ENCODE measurements at regions of chr3 and their contacts with region 1.

Region 1: DNA sequence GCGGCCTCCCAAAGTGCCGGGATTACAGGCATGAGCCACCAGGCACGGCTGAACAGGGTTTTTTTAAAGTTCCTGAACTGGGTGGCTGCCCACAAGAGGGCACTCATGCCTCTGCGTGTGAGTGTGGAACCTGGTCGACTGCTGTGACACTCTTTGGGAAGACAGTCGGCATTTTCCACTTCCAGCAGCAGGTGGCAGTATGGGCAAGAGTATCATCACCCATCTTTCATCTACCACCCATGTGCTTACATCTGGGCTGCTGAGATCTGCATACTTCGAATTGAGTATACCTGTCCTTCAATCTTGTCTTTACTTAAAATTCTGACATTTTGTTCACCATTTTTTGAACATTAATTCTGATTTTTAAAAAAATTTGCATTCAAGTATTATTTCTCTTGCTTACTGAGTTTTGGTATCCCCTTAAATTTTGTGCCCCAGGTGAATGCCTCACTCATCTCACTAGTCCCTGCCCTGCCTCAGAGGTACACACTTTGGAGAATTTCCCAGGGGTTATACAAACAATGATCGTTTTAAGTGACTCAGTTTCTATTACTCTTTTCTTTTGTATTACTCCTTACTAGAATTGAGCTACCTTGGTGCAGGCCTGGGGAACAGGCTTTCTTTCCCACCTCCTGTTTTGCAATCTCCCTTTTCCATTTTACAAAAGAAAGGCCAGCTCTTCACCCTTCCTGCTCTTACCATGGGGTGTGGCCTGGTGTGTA is 11.8 kb downstream of the CLEC3B start:
- DNase-seq: peak; percentile 93
- H3K4me3 ChIP-seq: no peak overlapping the region
- H3K27ac ChIP-seq: peak overlapping the region in 4 of 8 donors; percentile 7 to 78 (median 52)
- H3K4me1 ChIP-seq: peaks cover 17 to 73% (median 49%) of the 10 kb centered on the region in 6 donors
- H3K27me3 ChIP-seq: peaks cover 0 to 19% (median 0%) of the 10 kb centered on the region in 7 donors
- CTCF ChIP-seq: peak; percentile 86 to 98 (median 96)
- POLR2A ChIP-seq: no peak

Region 2: GRCh38 chr3:45210308-45211041 is 172.6 kb after region 1 on chr3:
- intact Hi-C with region 1: loop called (anchors 5 kb)
- DNase-seq: peak; percentile 91
- H3K4me3 ChIP-seq: no peak overlapping the region
- H3K27ac ChIP-seq: no peak overlapping the region
- H3K4me1 ChIP-seq: peaks cover 0 to 10% (median 0%) of the 10 kb centered on the region in 6 donors
- H3K27me3 ChIP-seq: peaks cover 0 to 23% (median 0%) of the 10 kb centered on the region in 7 donors
- CTCF ChIP-seq: peak; percentile 21 to 77 (median 67)
- POLR2A ChIP-seq: no peak

Region 3: GRCh38 chr3:45426161-45426560 is 388.3 kb after region 1 on chr3:
- intact Hi-C with region 1: no loop called
- DNase-seq: no peak
- H3K4me3 ChIP-seq: no peak overlapping the region
- H3K27ac ChIP-seq: no peak overlapping the region
- H3K4me1 ChIP-seq: no peaks in the 10 kb centered on the region
- H3K27me3 ChIP-seq: no peaks in the 10 kb centered on the region
- CTCF ChIP-seq: no peak
- POLR2A ChIP-seq: no peak

Region 4: GRCh38 chr3:45499529-45499928 is 461.6 kb after region 1 on chr3:
- intact Hi-C with region 1: loop called (anchors 10 kb)
- DNase-seq: no peak
- H3K4me3 ChIP-seq: no peak overlapping the region
- H3K27ac ChIP-seq: no peak overlapping the region
- H3K4me1 ChIP-seq: peaks cover 0 to 21% (median 13%) of the 10 kb centered on the region in 6 donors
- H3K27me3 ChIP-seq: no peaks in the 10 kb centered on the region
- CTCF ChIP-seq: peak in 7 of 11 experiments; percentile 14 to 39 (median 29)
- POLR2A ChIP-seq: no peak

Measured in spleen (tissue), 13 donors.